Testis (tissue), 5 donors: ENCODE measurements at regions of chr11 and their contacts with region 1.

Region 1: DNA sequence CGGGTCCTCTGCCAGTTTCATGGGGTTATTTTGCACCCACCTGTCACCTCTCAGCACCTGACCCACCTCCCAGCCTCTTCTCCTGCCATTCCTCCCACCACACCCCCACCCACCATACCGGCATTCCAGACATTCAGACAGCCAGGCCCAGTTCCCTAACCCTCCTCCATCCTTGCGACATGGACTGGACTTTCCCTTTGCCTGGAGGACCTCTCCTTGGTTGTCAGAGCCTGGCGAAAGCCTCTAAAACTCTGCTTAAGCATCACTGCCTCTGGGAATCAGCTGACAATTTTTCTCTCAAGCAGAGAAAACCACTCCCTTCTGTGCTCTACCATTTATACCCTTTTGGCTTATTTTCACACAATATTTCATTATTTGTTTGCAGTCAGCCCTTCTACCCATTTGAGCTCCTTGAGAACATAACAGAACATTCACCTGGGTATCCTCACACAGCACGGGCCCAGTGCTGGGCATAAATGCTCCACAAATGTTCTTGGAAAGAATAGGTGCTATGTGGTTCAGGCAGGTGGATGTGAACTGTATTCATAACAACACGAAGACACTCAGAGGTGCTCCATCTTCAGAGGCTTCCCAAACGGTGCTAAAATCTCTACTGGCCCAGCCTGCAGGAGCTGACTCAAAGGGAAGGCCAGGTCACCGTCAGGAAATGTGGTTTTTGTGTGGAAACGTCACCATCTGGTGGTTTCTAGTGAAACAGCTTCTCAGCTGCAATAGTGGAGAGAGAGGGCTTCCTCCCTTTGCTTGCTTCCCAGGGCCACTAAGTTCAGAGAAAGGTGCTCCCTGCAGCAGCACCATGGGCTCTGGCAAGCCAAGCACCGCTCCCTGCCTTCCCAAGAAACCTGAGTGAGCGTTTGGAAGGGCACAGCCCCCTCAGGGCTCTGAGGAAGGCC is 10.4 kb downstream of the SPATA19 start:
- DNase-seq: peak; percentile 66
- H3K4me3 ChIP-seq: no peak overlapping the region
- H3K27ac ChIP-seq: no peak overlapping the region
- H3K4me1 ChIP-seq: no peaks in the 10 kb centered on the region
- H3K27me3 ChIP-seq: no peaks in the 10 kb centered on the region
- CTCF ChIP-seq: peak; percentile 27 to 70 (median 50)
- POLR2A ChIP-seq: no peak

Region 2: GRCh38 chr11:133082851-133083488 is 752.0 kb before region 1 on chr11:
- intact Hi-C with region 1: loop called (anchors 5 kb)
- DNase-seq: peak; percentile 72
- H3K4me3 ChIP-seq: peak overlapping the region; percentile 51 to 53
- H3K27ac ChIP-seq: no peak overlapping the region
- H3K4me1 ChIP-seq: no peaks in the 10 kb centered on the region
- H3K27me3 ChIP-seq: no peaks in the 10 kb centered on the region
- CTCF ChIP-seq: peak; percentile 83 to 99 (median 95)
- POLR2A ChIP-seq: no peak